CD8-positive, alpha-beta T cell (primary cell): ENCODE measurements at regions of chr15 and their contacts with region 1.

Region 1: GRCh38 chr15:57561041-57561711 is 30.5 kb upstream of the MYZAP start:
- DNase-seq: peak; percentile 23 to 71 (median 59)
- ATAC-seq: peak; percentile 77
- H3K4me3 ChIP-seq: no peak overlapping the region
- H3K4me3 Mint-ChIP-seq: no peak overlapping the region
- H3K27ac ChIP-seq: no peak overlapping the region
- H3K27ac Mint-ChIP-seq: no peak overlapping the region
- H3K4me1 ChIP-seq: peaks cover 8% of the 10 kb centered on the region
- H3K4me1 Mint-ChIP-seq: peaks cover 27% of the 10 kb centered on the region
- H3K27me3 ChIP-seq: peaks cover 0 to 3% of the 10 kb centered on the region in 2 experiments
- H3K27me3 Mint-ChIP-seq: peaks cover 6% of the 10 kb centered on the region
- CTCF ChIP-seq: peak; percentile 86

Region 2: GRCh38 chr15:57548835-57549234 is 12.3 kb before region 1 on chr15:
- CTCF ChIA-PET with region 1: interaction called, 15 read pairs
- POLR2A ChIA-PET with region 1: no interaction called
- intact Hi-C with region 1: no loop called
- DNase-seq: no peak
- ATAC-seq: no peak
- H3K4me3 ChIP-seq: no peak overlapping the region
- H3K4me3 Mint-ChIP-seq: no peak overlapping the region
- H3K27ac ChIP-seq: no peak overlapping the region
- H3K27ac Mint-ChIP-seq: no peak overlapping the region
- H3K4me1 ChIP-seq: no peaks in the 10 kb centered on the region
- H3K4me1 Mint-ChIP-seq: no peaks in the 10 kb centered on the region
- H3K27me3 ChIP-seq: no peaks in the 10 kb centered on the region
- H3K27me3 Mint-ChIP-seq: no peaks in the 10 kb centered on the region
- CTCF ChIP-seq: no peak

Region 3: GRCh38 chr15:57611938-57612337 is 50.8 kb after region 1 on chr15:
- CTCF ChIA-PET with region 1: interaction called, 3 read pairs
- POLR2A ChIA-PET with region 1: no interaction called
- intact Hi-C with region 1: loop called in 1 of 2 experiments (anchors 2 kb)
- DNase-seq: no peak
- ATAC-seq: no peak
- H3K4me3 ChIP-seq: no peak overlapping the region
- H3K4me3 Mint-ChIP-seq: no peak overlapping the region
- H3K27ac ChIP-seq: no peak overlapping the region
- H3K27ac Mint-ChIP-seq: no peak overlapping the region
- H3K4me1 ChIP-seq: no peaks in the 10 kb centered on the region
- H3K4me1 Mint-ChIP-seq: no peaks in the 10 kb centered on the region
- H3K27me3 ChIP-seq: no peaks in the 10 kb centered on the region
- H3K27me3 Mint-ChIP-seq: peaks cover 5% of the 10 kb centered on the region
- CTCF ChIP-seq: no peak

Region 4: DNA sequence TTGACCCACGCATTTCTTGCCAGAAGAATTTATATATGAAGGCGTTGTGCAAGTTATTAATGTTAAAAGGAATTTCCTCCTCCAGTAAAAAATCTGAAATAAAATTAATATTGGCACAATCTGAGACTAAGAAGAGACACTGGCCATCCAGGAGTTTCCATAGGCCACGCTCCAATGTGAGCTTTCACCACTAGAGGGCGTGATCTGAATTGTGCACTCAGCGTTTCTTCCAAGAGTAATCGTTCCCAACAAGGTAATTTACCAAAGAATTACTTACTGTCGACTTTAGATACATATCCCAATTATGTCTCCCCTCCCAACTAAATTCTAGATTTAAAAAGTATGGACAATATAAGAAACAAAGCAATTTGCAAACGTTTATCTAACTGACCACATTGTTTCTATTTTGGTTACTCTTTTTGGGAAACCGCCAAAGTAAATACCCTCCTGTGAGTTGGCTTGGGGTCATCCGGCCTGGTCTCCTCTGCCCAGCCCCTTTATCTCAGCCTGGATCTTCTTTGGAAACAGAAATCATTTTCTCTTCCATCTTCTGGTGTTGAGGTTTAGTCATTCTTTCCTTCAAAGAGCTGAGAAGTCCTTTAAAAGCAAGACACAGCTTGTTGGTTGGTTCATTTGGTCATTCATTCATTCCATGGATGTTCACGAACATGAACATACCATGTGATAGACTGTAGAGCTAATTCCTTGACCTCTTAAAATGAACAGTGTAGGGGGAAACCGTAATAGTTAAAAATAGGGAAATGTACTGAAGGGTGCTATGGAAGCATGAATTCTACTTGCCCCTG is 171.6 kb after region 1 on chr15:
- CTCF ChIA-PET with region 1: no interaction called
- POLR2A ChIA-PET with region 1: no interaction called
- intact Hi-C with region 1: loop called in 1 of 2 experiments (anchors 10 kb)
- DNase-seq: peak in 8 of 9 experiments; percentile 17 to 61 (median 50)
- ATAC-seq: no peak
- H3K4me3 ChIP-seq: no peak overlapping the region
- H3K4me3 Mint-ChIP-seq: no peak overlapping the region
- H3K27ac ChIP-seq: no peak overlapping the region
- H3K27ac Mint-ChIP-seq: no peak overlapping the region
- H3K4me1 ChIP-seq: no peaks in the 10 kb centered on the region
- H3K4me1 Mint-ChIP-seq: peaks cover 8% of the 10 kb centered on the region
- H3K27me3 ChIP-seq: no peaks in the 10 kb centered on the region
- H3K27me3 Mint-ChIP-seq: no peaks in the 10 kb centered on the region
- CTCF ChIP-seq: peak; percentile 92

Region 5: DNA sequence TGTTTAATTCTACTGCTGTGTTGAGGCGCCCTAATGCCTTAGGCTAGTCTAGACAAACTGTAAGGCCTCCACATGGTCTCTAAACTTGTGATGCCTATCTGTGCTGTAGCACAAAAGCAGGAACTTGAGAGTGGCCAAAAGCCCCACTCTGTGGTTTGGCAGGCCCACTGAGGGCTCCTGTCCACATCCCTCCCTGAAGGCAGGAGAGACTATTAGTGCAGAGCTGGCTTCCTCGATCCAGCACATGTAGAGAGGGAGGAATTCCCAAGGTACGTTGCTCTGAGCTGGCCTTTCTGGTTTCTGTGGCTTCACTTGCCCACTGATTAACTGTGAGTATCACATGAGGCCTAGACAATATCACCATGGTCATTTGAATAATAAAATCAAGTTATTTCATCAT is 235.9 kb after region 1 on chr15:
- CTCF ChIA-PET with region 1: no interaction called
- POLR2A ChIA-PET with region 1: no interaction called
- intact Hi-C with region 1: no loop called
- DNase-seq: no peak
- ATAC-seq: no peak
- H3K4me3 ChIP-seq: no peak overlapping the region
- H3K4me3 Mint-ChIP-seq: no peak overlapping the region
- H3K27ac ChIP-seq: no peak overlapping the region
- H3K27ac Mint-ChIP-seq: no peak overlapping the region
- H3K4me1 ChIP-seq: no peaks in the 10 kb centered on the region
- H3K4me1 Mint-ChIP-seq: no peaks in the 10 kb centered on the region
- H3K27me3 ChIP-seq: no peaks in the 10 kb centered on the region
- H3K27me3 Mint-ChIP-seq: peaks cover 3% of the 10 kb centered on the region
- CTCF ChIP-seq: no peak

Region 6: GRCh38 chr15:58070801-58071418 is 509.7 kb after region 1 on chr15:
- CTCF ChIA-PET with region 1: no interaction called
- POLR2A ChIA-PET with region 1: no interaction called
- intact Hi-C with region 1: loop called in 1 of 2 experiments (anchors 2 kb)
- DNase-seq: peak in 5 of 9 experiments; percentile 8 to 48 (median 37)
- ATAC-seq: no peak
- H3K4me3 ChIP-seq: no peak overlapping the region
- H3K4me3 Mint-ChIP-seq: no peak overlapping the region
- H3K27ac ChIP-seq: no peak overlapping the region
- H3K27ac Mint-ChIP-seq: no peak overlapping the region
- H3K4me1 ChIP-seq: no peaks in the 10 kb centered on the region
- H3K4me1 Mint-ChIP-seq: peaks cover 4% of the 10 kb centered on the region
- H3K27me3 ChIP-seq: peaks cover 0 to 7% of the 10 kb centered on the region in 2 experiments
- H3K27me3 Mint-ChIP-seq: peaks cover 36% of the 10 kb centered on the region
- CTCF ChIP-seq: peak; percentile 67